ENCODE measurements at regions of chr15 and their contacts with region 1.

Region 1: DNA sequence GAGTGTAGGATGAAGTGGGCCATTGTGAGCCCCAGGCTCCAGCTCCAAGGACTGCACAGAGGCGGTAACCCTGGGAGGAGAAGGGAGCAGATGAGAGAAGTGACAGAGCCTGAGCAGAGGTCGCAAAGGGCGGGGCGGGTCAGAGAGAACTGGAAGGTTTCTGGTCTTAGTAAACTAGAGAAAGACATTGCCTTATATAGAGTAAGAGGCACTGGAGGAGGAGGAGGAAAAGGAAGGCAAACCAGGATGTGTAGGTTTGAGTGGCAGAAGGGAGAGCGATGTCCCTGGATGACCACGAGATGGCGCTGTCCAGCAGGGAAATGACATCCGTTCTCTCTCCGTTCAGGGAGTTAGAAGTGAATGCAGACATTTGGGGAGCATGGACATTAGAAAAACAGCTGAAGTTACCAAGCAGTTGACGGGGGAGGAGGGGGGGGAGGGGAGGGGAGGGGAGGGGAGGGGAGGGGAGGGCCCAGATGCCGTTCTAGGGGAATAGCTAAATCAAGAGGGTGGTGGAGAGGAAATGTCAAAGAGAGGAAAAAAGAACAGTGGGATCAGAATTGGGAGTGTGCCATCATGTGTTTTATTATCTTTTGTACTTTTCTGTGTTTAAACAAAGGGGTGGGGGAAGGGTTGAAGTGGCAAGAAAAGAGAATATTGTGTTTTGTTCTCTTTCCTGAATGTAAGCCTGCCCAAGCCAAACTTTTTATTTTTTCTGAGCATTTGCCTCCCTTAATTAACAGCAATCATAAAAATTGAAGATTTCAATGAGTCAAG is 48.8 kb downstream of the STARD5 start:
- DNase-seq: peak; percentile 89
- ATAC-seq: peak; percentile 99
- H3K4me3 Mint-ChIP-seq: no peak overlapping the region
- H3K27ac Mint-ChIP-seq: no peak overlapping the region
- H3K4me1 Mint-ChIP-seq: peaks cover 12% of the 10 kb centered on the region
- H3K27me3 Mint-ChIP-seq: peaks cover 5% of the 10 kb centered on the region
- CTCF ChIP-seq: peak; percentile 82

Region 2: DNA sequence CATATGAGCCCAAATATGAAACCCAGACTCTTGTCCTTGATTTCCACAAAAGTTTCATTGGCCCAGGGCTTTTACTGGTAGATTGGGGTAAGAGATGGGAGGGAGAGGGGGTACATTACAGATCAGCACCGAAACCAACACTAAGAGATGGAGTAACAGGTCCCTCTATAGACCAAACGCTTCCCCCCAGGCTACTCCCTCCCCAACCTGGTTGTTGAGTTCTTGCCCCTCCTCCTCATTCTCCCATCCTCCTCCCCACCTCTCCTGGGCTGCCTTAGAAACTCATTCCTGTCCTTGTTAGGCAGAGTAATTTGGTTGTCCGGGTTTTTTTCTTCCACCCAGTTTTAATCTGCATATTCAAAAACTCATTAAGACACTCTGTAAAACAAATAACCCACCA is 359.6 kb before region 1 on chr15:
- CTCF ChIA-PET with region 1: no interaction called
- POLR2A ChIA-PET with region 1: no interaction called
- DNase-seq: peak; percentile 66
- ATAC-seq: peak; percentile 99
- H3K4me3 Mint-ChIP-seq: no peak overlapping the region
- H3K27ac Mint-ChIP-seq: no peak overlapping the region
- H3K4me1 Mint-ChIP-seq: peaks cover 23% of the 10 kb centered on the region
- H3K27me3 Mint-ChIP-seq: no peaks in the 10 kb centered on the region; the same call in 1 of the 2 replicates
- CTCF ChIP-seq: no peak

Region 3: DNA sequence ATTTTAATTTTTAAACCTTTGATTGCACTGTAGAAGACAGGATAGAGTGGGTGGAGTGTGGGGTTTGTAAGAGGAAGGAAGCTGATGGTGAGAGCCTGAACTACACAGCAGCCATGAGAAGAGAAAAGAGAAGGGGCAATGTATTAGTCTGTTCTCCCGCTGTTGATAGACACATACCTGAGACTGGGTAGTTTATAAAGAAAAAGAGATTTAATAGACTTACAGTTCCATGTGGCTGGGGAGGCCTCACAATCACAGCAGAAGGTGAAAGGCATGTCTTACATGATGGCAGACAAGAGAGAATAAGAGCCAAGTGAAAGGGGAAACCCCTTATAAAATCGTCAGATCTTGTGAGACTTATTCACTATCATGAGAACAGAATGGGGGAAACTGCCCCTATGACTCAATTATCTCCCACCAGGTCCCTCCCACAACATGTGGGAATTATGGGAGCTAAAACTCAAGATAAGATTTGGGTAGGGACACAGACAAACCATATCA is 11.6 kb after region 1 on chr15:
- CTCF ChIA-PET with region 1: interaction called, 10 read pairs
- POLR2A ChIA-PET with region 1: no interaction called
- DNase-seq: no peak
- ATAC-seq: no peak
- H3K4me3 Mint-ChIP-seq: no peak overlapping the region
- H3K27ac Mint-ChIP-seq: no peak overlapping the region
- H3K4me1 Mint-ChIP-seq: no peaks in the 10 kb centered on the region
- H3K27me3 Mint-ChIP-seq: no peaks in the 10 kb centered on the region
- CTCF ChIP-seq: no peak

Region 4: DNA sequence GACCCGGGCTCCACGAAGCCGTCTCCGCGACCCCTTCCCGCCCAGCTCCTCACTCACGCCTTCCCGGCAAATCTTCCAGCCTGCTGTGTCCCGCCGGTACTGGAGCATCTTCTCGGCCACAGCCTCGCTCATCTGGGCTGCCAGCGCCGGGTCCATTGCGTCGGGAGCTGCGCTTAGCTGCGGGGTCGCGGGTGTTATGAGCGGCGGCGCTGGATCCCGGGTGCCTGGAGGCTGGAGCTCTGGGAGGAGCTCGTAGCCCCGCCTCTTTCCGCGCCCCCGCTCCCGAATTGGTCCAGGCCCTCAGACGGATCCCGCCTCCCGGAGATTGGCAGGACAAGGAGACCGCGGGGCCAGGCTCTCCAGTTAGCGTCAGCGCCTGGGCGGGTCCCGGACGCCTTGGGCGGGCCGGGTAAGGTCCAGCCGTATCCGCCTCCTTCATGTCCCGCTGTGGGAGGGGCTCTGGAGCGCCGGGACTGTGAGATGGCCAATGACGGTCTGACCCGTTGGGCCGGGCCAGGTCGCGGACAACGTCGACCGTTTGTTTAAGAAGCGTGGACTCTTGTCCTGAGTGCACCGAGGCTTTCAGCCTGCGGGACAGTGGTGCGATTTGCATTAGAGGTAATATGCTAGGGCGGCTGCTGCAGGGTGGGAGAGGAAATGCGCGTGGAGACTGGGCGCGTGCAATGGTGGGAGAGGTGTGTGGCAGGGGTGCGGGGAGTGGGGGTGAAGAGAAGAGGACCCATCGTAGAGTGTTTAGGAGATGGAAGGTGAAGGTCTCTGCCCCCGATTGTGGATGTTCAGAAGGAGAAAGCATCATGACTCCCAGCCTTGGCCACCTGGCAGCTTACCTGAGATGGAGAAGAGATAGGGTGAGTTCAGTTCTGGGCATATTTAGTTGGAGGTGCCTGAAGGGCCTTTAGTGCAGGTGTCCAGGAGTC is 49.1 kb after region 1 on chr15 and contains the start of gene STARD5:
- CTCF ChIA-PET with region 1: interaction called, 15 read pairs
- POLR2A ChIA-PET with region 1: no interaction called
- DNase-seq: peak; percentile 100
- ATAC-seq: peak; percentile 100
- H3K4me3 Mint-ChIP-seq: peak within 1 kb of the TSS; percentile 100
- H3K27ac Mint-ChIP-seq: peak within 1 kb of the TSS; percentile 98
- H3K4me1 Mint-ChIP-seq: peaks cover 11% of the 10 kb centered on the region
- H3K27me3 Mint-ChIP-seq: peaks cover 12% of the 10 kb centered on the region
- CTCF ChIP-seq: no peak
- total RNA-seq, gene STARD5: 6.3 to 7.2 TPM (median 6.8 TPM) in 3 replicates

Region 5: GRCh38 chr15:81394603-81395002 is 119.5 kb after region 1 on chr15:
- CTCF ChIA-PET with region 1: interaction called, 65 read pairs
- POLR2A ChIA-PET with region 1: no interaction called
- DNase-seq: no peak
- ATAC-seq: no peak
- H3K4me3 Mint-ChIP-seq: no peak overlapping the region
- H3K27ac Mint-ChIP-seq: no peak overlapping the region
- H3K4me1 Mint-ChIP-seq: no peaks in the 10 kb centered on the region
- H3K27me3 Mint-ChIP-seq: no peaks in the 10 kb centered on the region
- CTCF ChIP-seq: no peak

Region 6: GRCh38 chr15:81400640-81401236 is 125.6 kb after region 1 on chr15:
- CTCF ChIA-PET with region 1: interaction called, 65 read pairs
- POLR2A ChIA-PET with region 1: no interaction called
- DNase-seq: no peak
- ATAC-seq: peak; percentile 48; the same call in 1 of the 2 replicates
- H3K4me3 Mint-ChIP-seq: no peak overlapping the region
- H3K27ac Mint-ChIP-seq: no peak overlapping the region
- H3K4me1 Mint-ChIP-seq: no peaks in the 10 kb centered on the region; the same call in 1 of the 2 replicates
- H3K27me3 Mint-ChIP-seq: no peaks in the 10 kb centered on the region
- CTCF ChIP-seq: peak; percentile 38; the same call in 1 of the 2 replicates